ENCODE measurements at regions of chr4 and their contacts with region 1.

Region 1: DNA sequence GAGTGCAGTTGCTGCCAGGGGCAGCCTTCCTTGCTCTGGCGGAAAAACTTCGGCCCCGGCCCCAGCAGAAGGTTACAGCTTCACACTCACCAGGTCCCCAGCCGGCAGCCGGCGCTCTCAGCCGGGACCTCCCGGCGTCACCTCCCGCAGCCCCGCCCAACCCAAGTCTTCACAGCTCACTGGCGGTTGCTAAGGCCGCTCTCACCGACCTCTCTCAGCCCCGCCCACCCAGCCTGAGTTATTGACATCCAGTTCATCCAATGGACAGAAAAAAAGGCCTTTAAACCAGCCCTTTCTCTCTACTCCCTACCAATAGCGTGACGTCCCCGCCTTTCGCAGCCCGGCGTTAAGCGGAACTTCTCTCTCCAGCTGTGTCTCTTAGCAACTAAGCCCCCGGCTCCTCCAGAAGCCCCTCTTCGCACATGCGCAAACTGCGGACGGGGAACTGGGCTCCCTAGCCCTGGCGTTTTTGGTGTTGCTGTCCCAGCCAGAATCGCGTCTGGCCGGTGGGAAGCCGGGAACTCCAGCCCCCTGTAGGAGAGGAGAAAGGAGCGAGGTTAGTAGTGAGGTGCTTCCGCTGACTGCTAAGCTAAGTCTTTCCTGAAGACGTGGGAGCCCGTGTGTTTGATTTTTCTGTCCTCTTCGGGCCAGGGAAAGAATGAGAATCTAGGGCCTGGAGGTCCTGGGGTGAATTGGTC is at the start of gene BBS12:
- DNase-seq: peak; percentile 95 to 100 (median 97)
- ATAC-seq: peak; percentile 98
- H3K4me3 ChIP-seq: peak within 1 kb of the TSS; percentile 66
- H3K27ac ChIP-seq: peak within 1 kb of the TSS; percentile 73
- H3K4me1 ChIP-seq: peaks cover 4% of the 10 kb centered on the region in 2 experiments; a peak in 3 of 5 replicates
- H3K27me3 ChIP-seq: no peaks in the 10 kb centered on the region
- CTCF ChIP-seq: peak; percentile 61 to 76 (median 65)
- EP300 ChIP-seq: peak; percentile 29; the same call in 1 of the 2 replicates
- POLR2A ChIP-seq: peak; percentile 55; the same call in 1 of the 2 replicates
- RAD21 ChIP-seq: peak; percentile 59 to 64
- polyA plus RNA-seq, gene BBS12: 5.1 to 6.5 TPM

Region 2: GRCh38 chr4:122722256-122722655 is 10.2 kb before region 1 on chr4:
- CTCF ChIA-PET with region 1: no interaction called
- POLR2A ChIA-PET with region 1: interaction called, 10 read pairs
- in situ Hi-C with region 1: no loop called
- intact Hi-C with region 1: no loop called
- DNase-seq: no peak
- ATAC-seq: no peak
- H3K4me3 ChIP-seq: no peak overlapping the region
- H3K27ac ChIP-seq: no peak overlapping the region
- H3K4me1 ChIP-seq: no peaks in the 10 kb centered on the region; a peak in 1 of 5 replicates
- H3K27me3 ChIP-seq: no peaks in the 10 kb centered on the region
- CTCF ChIP-seq: no peak
- EP300 ChIP-seq: no peak
- POLR2A ChIP-seq: no peak
- RAD21 ChIP-seq: no peak

Region 3: GRCh38 chr4:122744229-122744628 is 11.8 kb after region 1 on chr4:
- CTCF ChIA-PET with region 1: no interaction called
- POLR2A ChIA-PET with region 1: interaction called, 10 read pairs
- in situ Hi-C with region 1: no loop called
- intact Hi-C with region 1: loop called (anchors 2 kb)
- DNase-seq: no peak
- ATAC-seq: peak; percentile 32; the same call in 2 of the 3 replicates
- H3K4me3 ChIP-seq: no peak overlapping the region
- H3K27ac ChIP-seq: no peak overlapping the region
- H3K4me1 ChIP-seq: peaks cover 0 to 31% of the 10 kb centered on the region in 2 experiments; a peak in 3 of 5 replicates
- H3K27me3 ChIP-seq: no peaks in the 10 kb centered on the region
- CTCF ChIP-seq: no peak
- EP300 ChIP-seq: no peak
- POLR2A ChIP-seq: no peak
- RAD21 ChIP-seq: no peak